MCF 10A (cell line): ENCODE measurements at regions of chr3 and their contacts with region 1.

Region 1: GRCh38 chr3:46909535-46910442 is 32.3 kb downstream of the PTH1R start:
- DNase-seq: peak; percentile 81
- H3K4me3 Mint-ChIP-seq: no peak overlapping the region
- H3K27ac Mint-ChIP-seq: no peak overlapping the region
- H3K4me1 Mint-ChIP-seq: peaks cover 13% of the 10 kb centered on the region
- H3K27me3 Mint-ChIP-seq: no peaks in the 10 kb centered on the region
- CTCF ChIP-seq: peak; percentile 87

Region 2: GRCh38 chr3:46423588-46423987 is 486.2 kb before region 1 on chr3:
- CTCF ChIA-PET with region 1: no interaction called
- POLR2A ChIA-PET with region 1: no interaction called
- intact Hi-C with region 1: no loop called
- DNase-seq: peak; percentile 97
- H3K4me3 Mint-ChIP-seq: no peak overlapping the region
- H3K27ac Mint-ChIP-seq: no peak overlapping the region
- H3K4me1 Mint-ChIP-seq: peaks cover 16% of the 10 kb centered on the region
- H3K27me3 Mint-ChIP-seq: no peaks in the 10 kb centered on the region
- CTCF ChIP-seq: no peak

Region 3: DNA sequence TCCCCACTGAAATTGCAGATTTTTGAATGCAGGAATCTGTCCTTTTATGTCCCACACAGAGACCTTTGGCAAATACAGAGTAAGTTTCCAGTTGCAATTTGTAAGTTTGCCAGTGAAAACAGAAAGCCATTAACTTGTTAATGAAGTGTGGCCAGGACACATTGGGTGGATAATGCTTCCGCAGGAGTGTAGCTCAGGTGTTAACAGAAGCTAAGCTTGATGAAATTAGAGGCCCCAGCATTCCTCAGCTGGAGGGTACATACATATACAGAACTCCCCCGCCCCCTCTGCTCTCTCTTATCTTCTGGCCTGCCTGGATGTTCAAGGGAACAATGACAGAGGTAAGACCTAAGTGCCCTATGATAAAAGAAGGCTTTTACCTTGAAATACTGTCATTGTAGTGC is 335.5 kb before region 1 on chr3:
- CTCF ChIA-PET with region 1: no interaction called
- POLR2A ChIA-PET with region 1: no interaction called
- intact Hi-C with region 1: no loop called
- DNase-seq: no peak
- H3K4me3 Mint-ChIP-seq: no peak overlapping the region
- H3K27ac Mint-ChIP-seq: no peak overlapping the region
- H3K4me1 Mint-ChIP-seq: no peaks in the 10 kb centered on the region
- H3K27me3 Mint-ChIP-seq: no peaks in the 10 kb centered on the region
- CTCF ChIP-seq: no peak

Region 4: DNA sequence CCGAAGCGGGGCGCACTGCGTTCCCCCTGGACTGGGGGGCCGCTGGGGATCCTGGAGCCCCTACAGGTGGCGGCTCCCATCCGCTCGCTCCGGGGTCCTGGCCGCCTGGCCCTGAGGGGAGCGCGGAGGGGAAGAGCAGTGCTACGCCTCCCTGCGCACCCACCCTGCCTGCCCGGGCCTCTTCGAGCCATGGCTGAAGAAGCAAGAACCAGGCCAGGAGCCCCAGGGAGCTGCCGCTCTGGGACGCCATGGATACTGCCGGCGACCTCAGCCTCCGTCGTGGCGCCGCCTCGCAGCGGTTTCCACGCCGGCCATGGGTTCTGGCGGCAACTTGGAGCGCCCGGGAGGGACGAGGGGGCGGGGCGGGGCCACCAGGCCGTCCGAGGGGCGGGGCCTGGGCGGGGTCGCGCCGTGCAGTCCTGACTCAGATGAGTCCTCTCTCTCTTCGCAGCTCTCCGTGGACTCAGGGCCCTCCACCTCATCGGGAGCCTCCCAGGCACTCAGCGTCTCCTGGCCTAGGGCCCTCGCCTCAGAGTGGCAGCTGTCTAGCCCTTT is 97.5 kb before region 1 on chr3:
- CTCF ChIA-PET with region 1: no interaction called
- POLR2A ChIA-PET with region 1: no interaction called
- intact Hi-C with region 1: no loop called
- DNase-seq: peak; percentile 58
- H3K4me3 Mint-ChIP-seq: no peak overlapping the region
- H3K27ac Mint-ChIP-seq: no peak overlapping the region
- H3K4me1 Mint-ChIP-seq: no peaks in the 10 kb centered on the region
- H3K27me3 Mint-ChIP-seq: peaks cover 46% of the 10 kb centered on the region
- CTCF ChIP-seq: no peak

Region 5: GRCh38 chr3:46866720-46867549 is 42.9 kb before region 1 on chr3:
- CTCF ChIA-PET with region 1: interaction called, 9 read pairs
- POLR2A ChIA-PET with region 1: interaction called, 3 read pairs
- intact Hi-C with region 1: loop called (anchors 1 kb)
- DNase-seq: peak; percentile 65
- H3K4me3 Mint-ChIP-seq: no peak overlapping the region
- H3K27ac Mint-ChIP-seq: no peak overlapping the region
- H3K4me1 Mint-ChIP-seq: peaks cover 11% of the 10 kb centered on the region
- H3K27me3 Mint-ChIP-seq: peaks cover 25% of the 10 kb centered on the region
- CTCF ChIP-seq: peak; percentile 81

Region 6: DNA sequence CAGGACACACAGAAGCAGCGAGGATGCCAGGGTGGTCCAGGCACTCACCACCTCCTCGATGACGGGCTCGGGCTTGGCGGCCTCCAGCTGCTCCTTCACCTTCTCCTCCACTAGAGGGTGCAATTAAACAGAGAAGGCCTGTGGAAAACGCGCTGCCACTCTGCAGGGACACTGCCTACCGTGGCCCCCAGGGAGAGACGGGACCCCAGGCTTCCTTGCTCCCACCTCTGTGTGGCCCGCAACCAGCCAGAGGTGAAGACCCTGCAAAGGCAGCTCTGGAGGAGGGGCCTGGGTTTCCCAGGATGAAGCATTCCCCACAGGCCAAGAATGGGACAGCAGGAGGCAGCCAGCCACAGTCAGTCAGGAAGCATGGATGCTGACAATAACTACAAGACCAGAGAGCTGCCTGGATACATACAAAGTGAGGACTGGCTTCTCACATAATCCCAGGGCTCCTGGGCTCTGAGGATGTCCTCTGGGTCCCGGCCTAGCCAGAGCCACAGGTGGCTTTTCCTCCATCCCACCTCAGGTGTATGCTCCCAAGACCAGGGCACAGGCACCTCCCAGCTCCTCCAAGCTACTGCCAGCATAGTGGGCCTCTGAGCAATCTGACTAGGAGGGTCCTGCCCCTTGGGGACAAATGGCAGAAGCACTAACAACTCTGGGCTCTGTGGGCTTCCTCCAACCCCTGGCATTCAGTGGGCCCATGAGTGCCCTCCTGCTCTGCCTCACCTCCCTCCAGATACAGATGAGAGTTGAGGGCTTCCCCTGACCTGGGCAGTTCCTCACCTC is 14.0 kb after region 1 on chr3:
- CTCF ChIA-PET with region 1: interaction called, 16 read pairs
- POLR2A ChIA-PET with region 1: interaction called, 4 read pairs
- intact Hi-C with region 1: no loop called
- DNase-seq: no peak
- H3K4me3 Mint-ChIP-seq: no peak overlapping the region
- H3K27ac Mint-ChIP-seq: peak overlapping the region; percentile 35
- H3K4me1 Mint-ChIP-seq: no peaks in the 10 kb centered on the region
- H3K27me3 Mint-ChIP-seq: no peaks in the 10 kb centered on the region
- CTCF ChIP-seq: peak; percentile 74

Region 7: GRCh38 chr3:46998121-46998851 is 88.5 kb after region 1 on chr3:
- CTCF ChIA-PET with region 1: interaction called, 4 read pairs
- POLR2A ChIA-PET with region 1: no interaction called
- intact Hi-C with region 1: loop called (anchors 2 kb)
- DNase-seq: peak; percentile 69
- H3K4me3 Mint-ChIP-seq: no peak overlapping the region
- H3K27ac Mint-ChIP-seq: no peak overlapping the region
- H3K4me1 Mint-ChIP-seq: peaks cover 5% of the 10 kb centered on the region
- H3K27me3 Mint-ChIP-seq: no peaks in the 10 kb centered on the region
- CTCF ChIP-seq: peak; percentile 80

Region 8: DNA sequence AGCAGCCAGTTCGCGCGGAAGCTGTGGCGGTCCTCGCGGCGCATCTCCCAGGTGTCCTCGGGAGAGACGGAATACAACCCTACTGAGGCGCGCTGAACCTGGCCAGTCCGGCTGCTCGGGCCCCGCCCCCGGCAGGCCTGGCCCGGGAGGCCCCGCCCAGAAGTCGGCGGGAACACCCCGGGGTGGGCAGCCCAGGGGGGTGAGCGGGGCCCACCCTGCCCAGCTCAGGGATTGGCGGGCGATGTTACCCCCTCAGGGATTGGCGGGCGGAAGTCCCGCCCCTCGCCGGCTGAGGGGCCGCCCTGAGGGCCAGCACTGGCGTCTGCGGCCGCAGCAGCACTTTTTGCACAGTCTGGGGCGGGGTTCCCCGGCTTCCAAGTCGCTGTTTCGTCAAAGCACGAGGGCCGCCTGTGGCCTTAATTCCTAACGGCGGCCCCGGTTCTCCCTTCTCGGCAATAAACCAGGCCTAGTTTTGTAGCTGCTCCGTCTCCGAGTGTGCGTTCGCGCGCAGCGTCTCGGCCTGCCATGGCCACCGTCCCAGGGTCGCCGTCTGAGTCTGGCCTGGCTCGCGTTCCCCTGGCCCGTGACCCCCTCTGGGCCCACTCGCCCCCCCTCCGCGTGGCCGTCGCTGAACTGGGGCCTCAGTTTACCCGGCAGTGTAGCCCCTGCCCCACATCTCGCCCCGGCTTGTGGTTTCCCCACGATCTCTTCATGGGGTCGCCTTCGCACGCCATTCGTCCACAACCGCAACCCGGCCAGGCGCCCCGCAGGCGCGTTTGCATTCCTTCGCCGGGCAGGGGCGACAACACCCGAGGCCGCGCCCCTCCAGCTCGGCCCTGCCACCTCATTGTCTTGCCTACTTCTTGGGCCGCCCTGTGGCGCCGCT is 99.7 kb after region 1 on chr3:
- CTCF ChIA-PET with region 1: no interaction called
- POLR2A ChIA-PET with region 1: no interaction called
- intact Hi-C with region 1: no loop called
- DNase-seq: no peak
- H3K4me3 Mint-ChIP-seq: no peak overlapping the region
- H3K27ac Mint-ChIP-seq: no peak overlapping the region
- H3K4me1 Mint-ChIP-seq: no peaks in the 10 kb centered on the region
- H3K27me3 Mint-ChIP-seq: no peaks in the 10 kb centered on the region
- CTCF ChIP-seq: no peak